Left ventricle myocardium inferior (tissue), 1 donor: ENCODE measurements at regions of chr21 and their contacts with region 1.

Region 1: DNA sequence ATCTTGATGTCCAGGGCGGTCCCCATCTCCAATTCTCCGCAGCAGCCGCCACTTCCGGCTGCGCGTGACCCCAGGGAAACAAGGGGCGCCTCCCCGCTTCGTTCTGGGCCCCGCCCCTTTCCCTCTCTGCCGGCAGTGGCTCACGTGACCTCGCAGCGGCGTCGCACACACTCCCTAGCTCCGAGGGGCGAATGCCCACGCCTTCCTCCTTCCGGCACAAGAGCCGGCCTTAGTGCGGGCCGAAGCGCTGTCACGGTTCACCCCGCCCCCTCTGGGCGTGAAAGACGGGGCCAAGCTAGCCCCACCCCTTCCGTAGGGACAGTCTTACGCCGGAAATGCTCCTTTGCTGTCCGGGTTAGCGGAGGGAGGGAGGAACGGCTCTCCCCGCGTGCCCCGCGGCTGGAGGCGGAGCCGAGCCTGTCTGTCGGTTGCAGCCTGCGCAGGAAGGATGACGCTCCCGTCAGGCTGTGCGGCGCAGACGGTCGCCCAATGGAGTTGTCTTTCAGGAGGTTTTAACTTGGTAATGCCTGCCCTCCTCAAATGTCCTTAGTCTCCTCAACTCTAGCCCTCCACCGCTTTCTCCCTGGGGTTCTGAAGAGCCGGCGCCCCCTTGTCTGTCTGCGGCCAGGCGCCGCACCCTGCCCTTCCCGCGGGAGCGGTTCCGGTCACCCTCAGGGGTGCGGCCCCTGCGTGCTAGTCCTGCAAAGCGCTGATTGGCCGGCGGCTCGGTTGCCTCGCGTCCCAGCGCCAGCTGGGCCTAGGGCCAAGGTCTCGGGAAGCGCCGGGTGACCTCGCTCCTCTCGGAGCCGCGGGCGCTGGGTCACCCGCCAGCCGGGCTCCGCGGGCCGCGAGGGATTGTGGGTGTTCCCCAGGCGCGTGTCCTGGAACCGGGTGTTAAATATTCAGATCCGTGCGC is at the start of gene VPS26C:
- DNase-seq: peak; percentile 98
- H3K4me3 ChIP-seq: peak within 1 kb of the TSS; percentile 96
- H3K27ac ChIP-seq: peak within 1 kb of the TSS; percentile 100
- H3K4me1 ChIP-seq: peaks cover 53% of the 10 kb centered on the region
- H3K27me3 ChIP-seq: no peaks in the 10 kb centered on the region
- CTCF ChIP-seq: no peak
- total RNA-seq, gene VPS26C: 54.2 TPM

Region 2: DNA sequence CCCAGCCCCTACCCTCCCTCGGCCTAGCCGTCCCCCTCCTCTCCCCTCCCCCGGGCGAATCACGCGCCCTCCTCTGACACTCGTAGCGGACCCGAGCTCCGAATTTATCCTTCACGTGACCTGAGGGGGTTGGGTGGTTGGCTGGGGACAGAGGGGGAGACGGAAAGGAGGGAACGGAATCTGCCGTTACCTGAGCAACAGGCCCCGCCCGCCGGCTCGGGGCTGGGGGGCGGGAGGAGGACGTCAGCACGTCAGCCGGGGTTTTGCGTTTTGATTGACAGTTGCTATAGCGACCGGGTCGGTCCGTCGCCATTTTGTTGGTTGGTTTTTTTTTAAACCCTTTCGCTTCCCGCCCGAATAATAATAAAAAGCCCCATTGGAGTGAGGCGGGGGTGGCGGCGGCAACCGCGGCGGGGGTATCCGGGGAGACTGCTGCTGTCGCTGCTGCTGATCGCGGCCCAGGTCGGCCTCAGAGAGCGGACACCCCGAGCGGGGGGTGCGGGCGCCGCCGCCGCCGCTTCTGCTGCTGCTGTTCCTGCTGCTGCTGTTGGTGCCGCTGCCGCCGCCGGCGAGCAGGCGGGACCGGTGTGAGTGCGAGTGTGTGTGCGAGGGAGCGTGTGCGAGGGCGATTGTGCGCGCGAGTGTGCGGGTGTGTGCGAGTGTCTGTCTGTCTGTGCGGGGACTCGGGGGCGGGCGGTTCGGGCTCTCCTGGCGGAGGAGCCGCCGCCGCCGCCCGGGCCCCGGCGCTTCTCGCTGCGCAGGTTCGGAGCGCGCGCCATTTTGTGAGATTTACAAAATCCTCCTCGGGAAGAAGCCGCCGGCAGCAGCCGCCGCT is 99.2 kb after region 1 on chr21 and contains the start of gene DYRK1A:
- intact Hi-C with region 1: loop called (anchors 10 kb)
- DNase-seq: peak; percentile 97
- H3K4me3 ChIP-seq: peak within 1 kb of the TSS; percentile 79
- H3K27ac ChIP-seq: peak within 1 kb of the TSS; percentile 100
- H3K4me1 ChIP-seq: peaks cover 56% of the 10 kb centered on the region
- H3K27me3 ChIP-seq: no peaks in the 10 kb centered on the region
- CTCF ChIP-seq: peak; percentile 14
- total RNA-seq, gene DYRK1A: 64.6 TPM